Activated T-helper 1 cell treated with anti-CD3 and anti-CD28 coated beads, Interleukin-12 subunit alpha, Interleukin-12 subunit beta, Interleukin-2, Interleukin-4 antibody, amounts not matched to agents 30 ng/mL and 10 ng/mL and 1 ng/mL, durations not matched to agents 14 hours and 24 hours and 36 hours (primary cell): ENCODE measurements at regions of chr2 and their contacts with region 1.

Region 1: GRCh38 chr2:44244129-44244871 is 31.0 kb upstream of the SLC3A1 start:
- DNase-seq: peak; percentile 27
- H3K4me3 Mint-ChIP-seq: peak overlapping the region; percentile 55
- H3K27ac Mint-ChIP-seq: no peak overlapping the region
- H3K4me1 Mint-ChIP-seq: peaks cover 9% of the 10 kb centered on the region
- H3K27me3 Mint-ChIP-seq: peaks cover 12% of the 10 kb centered on the region

Region 2: GRCh38 chr2:44342854-44343253 is 98.6 kb after region 1 on chr2:
- intact Hi-C with region 1: loop called (anchors 1 kb)
- DNase-seq: no peak
- H3K4me3 Mint-ChIP-seq: no peak overlapping the region
- H3K27ac Mint-ChIP-seq: no peak overlapping the region
- H3K4me1 Mint-ChIP-seq: no peaks in the 10 kb centered on the region
- H3K27me3 Mint-ChIP-seq: no peaks in the 10 kb centered on the region

Region 3: GRCh38 chr2:44479122-44479887 is 235.0 kb after region 1 on chr2:
- intact Hi-C with region 1: loop called (anchors 2 kb)
- DNase-seq: peak; percentile 24
- H3K4me3 Mint-ChIP-seq: no peak overlapping the region
- H3K27ac Mint-ChIP-seq: no peak overlapping the region
- H3K4me1 Mint-ChIP-seq: no peaks in the 10 kb centered on the region
- H3K27me3 Mint-ChIP-seq: no peaks in the 10 kb centered on the region